Common myeloid progenitor, CD34-positive (primary cell): ENCODE measurements at regions of chr9 and their contacts with region 1.

Region 1: GRCh38 chr9:2145746-2146145 is 130.6 kb downstream of the SMARCA2 start:
- DNase-seq: no peak
- H3K4me3 ChIP-seq: no peak overlapping the region
- H3K27ac ChIP-seq: peak overlapping the region in 1 of 2 experiments; percentile 73
- H3K4me1 ChIP-seq: peaks cover 0 to 27% (median 8%) of the 10 kb centered on the region in 4 experiments
- H3K27me3 ChIP-seq: no peaks in the 10 kb centered on the region

Region 2: GRCh38 chr9:2125906-2126305 is 19.8 kb before region 1 on chr9:
- CTCF ChIA-PET with region 1: interaction called, 31 read pairs
- POLR2A ChIA-PET with region 1: interaction called, 4 read pairs
- DNase-seq: peak; percentile 27 to 74 (median 65)
- H3K4me3 ChIP-seq: peak overlapping the region in 6 of 7 experiments; percentile 4 to 46 (median 24)
- H3K27ac ChIP-seq: peak overlapping the region in 1 of 2 experiments; percentile 47
- H3K4me1 ChIP-seq: peaks cover 6 to 27% (median 14%) of the 10 kb centered on the region in 4 experiments
- H3K27me3 ChIP-seq: no peaks in the 10 kb centered on the region

Region 3: GRCh38 chr9:2132484-2133082 is 13.2 kb before region 1 on chr9:
- CTCF ChIA-PET with region 1: interaction called, 31 read pairs
- POLR2A ChIA-PET with region 1: no interaction called
- DNase-seq: peak; percentile 39 to 65 (median 59)
- H3K4me3 ChIP-seq: no peak overlapping the region
- H3K27ac ChIP-seq: no peak overlapping the region
- H3K4me1 ChIP-seq: peaks cover 0 to 7% (median 0%) of the 10 kb centered on the region in 4 experiments
- H3K27me3 ChIP-seq: no peaks in the 10 kb centered on the region

Region 4: DNA sequence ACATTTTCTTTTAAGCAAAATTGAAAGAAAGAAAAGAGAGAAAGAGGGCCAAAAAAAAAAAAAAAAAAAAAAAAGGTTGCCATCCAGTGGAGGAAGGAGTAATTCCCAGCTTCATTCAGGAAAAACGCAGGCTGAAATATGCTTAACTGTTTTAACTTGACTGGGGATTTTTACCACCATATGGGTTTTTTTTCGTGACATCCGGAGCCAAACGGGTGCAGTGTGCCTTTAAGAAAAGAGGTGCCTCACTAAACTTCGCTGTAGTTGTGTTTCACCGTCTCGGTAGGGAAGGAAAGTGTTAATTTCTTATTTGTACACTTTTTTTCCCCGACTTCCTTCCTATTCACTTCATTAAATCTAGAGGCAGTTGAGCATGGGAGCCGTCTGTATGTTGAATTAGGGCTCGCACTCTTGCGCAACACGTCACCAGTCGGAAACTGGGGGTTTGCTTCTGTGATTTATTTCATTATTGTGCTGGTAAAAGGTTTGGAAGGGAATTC is 12.4 kb after region 1 on chr9:
- CTCF ChIA-PET with region 1: interaction called, 17 read pairs
- POLR2A ChIA-PET with region 1: no interaction called
- DNase-seq: peak; percentile 86 to 96 (median 93)
- H3K4me3 ChIP-seq: peak overlapping the region in 6 of 7 experiments; percentile 34 to 76 (median 58)
- H3K27ac ChIP-seq: peak overlapping the region in 1 of 2 experiments; percentile 43
- H3K4me1 ChIP-seq: peaks cover 52 to 89% (median 63%) of the 10 kb centered on the region in 4 experiments
- H3K27me3 ChIP-seq: no peaks in the 10 kb centered on the region